ENCODE measurements at regions of chr3 and their contacts with region 1.

Region 1: GRCh38 chr3:112464264-112464663 is 35.0 kb downstream of the BTLA start:
- DNase-seq: peak in 3 of 14 experiments; percentile 53 to 79 (median 57)
- ATAC-seq: peak; percentile 82
- H3K4me3 ChIP-seq: no peak overlapping the region
- H3K4me3 Mint-ChIP-seq: peak overlapping the region; percentile 60
- H3K27ac ChIP-seq: peak overlapping the region; percentile 47 to 55
- H3K27ac Mint-ChIP-seq: peak overlapping the region; percentile 72
- H3K4me1 ChIP-seq: peaks cover 25% of the 10 kb centered on the region
- H3K4me1 Mint-ChIP-seq: peaks cover 88% of the 10 kb centered on the region
- H3K27me3 ChIP-seq: no peaks in the 10 kb centered on the region
- H3K27me3 Mint-ChIP-seq: no peaks in the 10 kb centered on the region
- CTCF ChIP-seq: no peak

Region 2: GRCh38 chr3:112489674-112490479 is 25.6 kb after region 1 on chr3:
- CTCF ChIA-PET with region 1: interaction called, 3 read pairs
- POLR2A ChIA-PET with region 1: interaction called, 13 read pairs
- intact Hi-C with region 1: loop called in 1 of 2 experiments (anchors 5 kb)
- DNase-seq: peak in 2 of 14 experiments; percentile 45 to 47
- ATAC-seq: peak; percentile 50
- H3K4me3 ChIP-seq: no peak overlapping the region
- H3K4me3 Mint-ChIP-seq: peak overlapping the region; percentile 47
- H3K27ac ChIP-seq: no peak overlapping the region
- H3K27ac Mint-ChIP-seq: peak overlapping the region; percentile 90
- H3K4me1 ChIP-seq: peaks cover 31% of the 10 kb centered on the region
- H3K4me1 Mint-ChIP-seq: peaks cover 77% of the 10 kb centered on the region
- H3K27me3 ChIP-seq: no peaks in the 10 kb centered on the region
- H3K27me3 Mint-ChIP-seq: no peaks in the 10 kb centered on the region
- CTCF ChIP-seq: no peak

Region 3: DNA sequence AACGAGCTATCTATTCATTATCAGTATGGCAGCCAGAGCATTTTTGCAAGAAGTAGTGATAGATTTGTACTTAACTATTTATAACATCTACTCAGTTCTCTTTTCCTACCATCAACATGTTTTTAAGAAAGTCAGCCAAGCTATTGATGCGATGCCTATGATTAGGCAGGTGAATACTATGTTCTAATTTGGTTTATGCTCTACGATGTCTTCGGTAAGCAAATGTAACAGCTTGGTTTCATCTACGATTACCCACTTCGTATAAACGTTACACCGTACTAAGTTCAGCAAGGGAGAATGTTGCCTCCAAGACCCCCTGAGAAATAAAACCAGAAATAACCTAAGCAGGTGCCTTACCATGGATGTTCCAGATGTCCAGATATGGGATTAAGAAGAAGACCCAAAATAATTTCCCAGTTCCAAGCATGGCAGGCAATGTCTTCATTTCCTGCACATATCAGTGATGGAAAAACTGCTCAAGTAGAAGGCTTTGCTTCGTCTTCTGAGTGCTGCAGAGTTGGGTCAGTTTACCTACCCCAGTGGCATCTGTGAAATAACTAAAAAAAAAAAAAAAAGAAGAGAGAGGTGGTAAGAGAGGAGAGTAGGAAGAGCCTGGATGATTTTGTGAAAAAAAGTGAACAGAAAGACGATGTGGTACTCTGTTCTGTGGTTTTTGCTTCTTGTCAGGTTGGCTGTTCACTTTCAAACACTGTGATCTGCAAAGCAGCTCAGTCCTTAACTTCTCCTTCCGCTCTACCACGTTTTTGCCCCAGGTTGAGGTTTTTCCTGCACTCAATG is 34.8 kb after region 1 on chr3 and contains the start of gene BTLA:
- CTCF ChIA-PET with region 1: interaction called, 5 read pairs
- POLR2A ChIA-PET with region 1: interaction called, 56 read pairs
- intact Hi-C with region 1: loop called in 1 of 2 experiments (anchors 5 kb)
- DNase-seq: peak in 6 of 14 experiments; percentile 7 to 69 (median 59)
- ATAC-seq: peak; percentile 71
- H3K4me3 ChIP-seq: peak within 1 kb of the TSS; percentile 66
- H3K4me3 Mint-ChIP-seq: peak within 1 kb of the TSS; percentile 90
- H3K27ac ChIP-seq: peak within 1 kb of the TSS; percentile 57 to 60
- H3K27ac Mint-ChIP-seq: peak within 1 kb of the TSS; percentile 90
- H3K4me1 ChIP-seq: peaks cover 10% of the 10 kb centered on the region
- H3K4me1 Mint-ChIP-seq: peaks cover 69% of the 10 kb centered on the region
- H3K27me3 ChIP-seq: no peaks in the 10 kb centered on the region
- H3K27me3 Mint-ChIP-seq: no peaks in the 10 kb centered on the region
- CTCF ChIP-seq: no peak
- total RNA-seq, gene BTLA: 8.5 to 9.6 TPM